PC-9 (cell line): ENCODE measurements at regions of chr6 and their contacts with region 1.

Region 1: GRCh38 chr6:46876126-46876525 is 45.6 kb downstream of the ADGRF5 start:
- DNase-seq: peak; percentile 92 to 100
- H3K4me3 ChIP-seq: no peak overlapping the region
- H3K27ac ChIP-seq: peak overlapping the region; percentile 51
- H3K4me1 ChIP-seq: peaks cover 31% of the 10 kb centered on the region
- H3K27me3 ChIP-seq: no peaks in the 10 kb centered on the region
- CTCF ChIP-seq: no peak

Region 2: GRCh38 chr6:46925563-46926253 is 49.6 kb after region 1 on chr6:
- CTCF ChIA-PET with region 1: no interaction called
- POLR2A ChIA-PET with region 1: no interaction called
- intact Hi-C with region 1: loop called (anchors 1 kb)
- DNase-seq: peak; percentile 71 to 98
- H3K4me3 ChIP-seq: peak overlapping the region; percentile 9; the same call in 1 of the 2 replicates
- H3K27ac ChIP-seq: peak overlapping the region; percentile 95
- H3K4me1 ChIP-seq: peaks cover 66% of the 10 kb centered on the region
- H3K27me3 ChIP-seq: no peaks in the 10 kb centered on the region
- CTCF ChIP-seq: no peak

Region 3: GRCh38 chr6:46932526-46933319 is 56.6 kb after region 1 on chr6:
- CTCF ChIA-PET with region 1: no interaction called
- POLR2A ChIA-PET with region 1: interaction called, 5 read pairs
- intact Hi-C with region 1: loop called (anchors 2 kb)
- DNase-seq: peak; percentile 15 to 70
- H3K4me3 ChIP-seq: no peak overlapping the region
- H3K27ac ChIP-seq: peak overlapping the region; percentile 34; the same call in 1 of the 2 replicates
- H3K4me1 ChIP-seq: peaks cover 77% of the 10 kb centered on the region
- H3K27me3 ChIP-seq: no peaks in the 10 kb centered on the region
- CTCF ChIP-seq: no peak

Region 4: DNA sequence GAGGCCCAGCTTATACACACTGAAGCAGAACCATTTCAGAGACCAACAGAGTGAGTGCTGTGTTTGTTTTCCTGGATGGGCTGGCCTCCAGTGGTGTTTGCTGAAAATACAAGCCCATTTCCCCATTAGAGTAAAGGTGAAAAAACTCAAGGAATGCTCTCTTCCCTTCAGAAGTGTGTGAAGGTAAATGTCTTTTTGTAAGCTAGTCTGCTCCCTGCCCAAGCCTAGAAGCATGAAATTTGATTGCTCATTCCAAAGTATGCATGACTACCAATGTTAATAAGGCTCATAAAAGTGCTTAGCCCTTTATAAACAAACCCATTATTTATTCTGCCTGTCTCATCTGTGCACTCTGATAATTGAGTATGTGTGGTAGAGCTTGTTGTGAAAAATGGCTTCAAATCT is 106.9 kb after region 1 on chr6:
- CTCF ChIA-PET with region 1: no interaction called
- POLR2A ChIA-PET with region 1: no interaction called
- intact Hi-C with region 1: loop called (anchors 1 kb)
- DNase-seq: peak; percentile 14 to 98
- H3K4me3 ChIP-seq: no peak overlapping the region
- H3K27ac ChIP-seq: peak overlapping the region; percentile 70
- H3K4me1 ChIP-seq: peaks cover 61% of the 10 kb centered on the region
- H3K27me3 ChIP-seq: no peaks in the 10 kb centered on the region
- CTCF ChIP-seq: peak; percentile 36; the same call in 1 of the 2 replicates